ENCODE measurements at regions of chr14 and their contacts with region 1.

Region 1: GRCh38 chr14:23544511-23545447 is 6.8 kb downstream of the ZFHX2 start:
- DNase-seq: no peak
- H3K4me3 ChIP-seq: no peak overlapping the region
- H3K27me3 ChIP-seq: no peaks in the 10 kb centered on the region
- CTCF ChIP-seq: no peak

Region 2: DNA sequence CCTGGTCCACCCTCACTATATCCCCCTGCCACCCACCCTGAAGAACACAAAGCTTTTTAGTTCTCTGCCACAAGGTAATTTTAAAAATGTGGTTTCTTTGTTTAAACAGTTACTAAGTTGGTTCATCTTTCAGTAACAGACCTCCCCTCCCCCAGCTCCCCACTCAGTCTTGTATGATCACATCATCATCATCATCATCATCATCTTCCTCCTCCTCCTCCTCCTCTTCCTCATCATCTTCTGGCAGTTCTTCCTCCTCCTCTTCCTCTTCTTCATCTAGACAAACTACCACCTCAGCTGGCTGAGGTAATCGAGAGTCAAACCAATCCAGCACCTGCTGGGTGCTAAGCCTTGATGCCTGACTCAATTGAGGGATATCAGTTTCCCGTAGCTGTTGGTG is 269.4 kb before region 1 on chr14:
- CTCF ChIA-PET with region 1: no interaction called
- POLR2A ChIA-PET with region 1: no interaction called
- DNase-seq: no peak
- H3K4me3 ChIP-seq: no peak overlapping the region
- H3K27me3 ChIP-seq: no peaks in the 10 kb centered on the region
- CTCF ChIP-seq: no peak

Region 3: DNA sequence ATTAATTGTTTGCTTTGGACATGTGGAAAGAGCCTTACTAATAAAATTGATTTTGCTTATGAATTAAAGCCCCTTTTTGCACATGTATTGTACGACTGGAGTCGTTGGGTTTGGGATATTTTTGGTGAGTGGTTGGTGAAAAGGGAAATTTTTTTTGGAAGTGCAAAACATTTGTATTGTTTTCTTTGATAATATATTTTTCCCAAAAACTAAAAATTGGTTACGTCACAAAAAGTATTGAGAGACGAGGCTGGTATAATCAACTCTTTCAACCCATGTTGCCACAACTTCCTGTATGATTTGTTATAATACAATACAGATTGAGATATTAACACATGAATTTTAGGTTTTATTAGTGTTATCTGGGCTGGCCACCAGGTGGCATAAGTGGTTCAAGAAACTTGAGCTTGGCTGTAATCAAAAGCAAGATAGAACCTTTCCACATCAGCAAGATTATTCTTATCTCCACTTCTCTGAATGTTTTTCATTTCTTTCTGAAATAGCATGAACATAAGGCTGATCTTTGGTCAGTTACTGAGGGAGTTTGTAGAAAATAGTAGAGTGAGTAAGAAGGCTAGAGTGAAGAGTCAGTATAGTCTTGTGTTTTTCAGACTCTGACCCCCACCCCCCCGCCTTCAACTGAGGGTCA is 66.5 kb before region 1 on chr14:
- CTCF ChIA-PET with region 1: interaction called, 11 read pairs
- POLR2A ChIA-PET with region 1: no interaction called
- DNase-seq: no peak
- H3K4me3 ChIP-seq: no peak overlapping the region
- H3K27me3 ChIP-seq: no peaks in the 10 kb centered on the region
- CTCF ChIP-seq: peak; percentile 62

Measured in BJ (cell line).